Activated B cell treated with CpG ODN at 0.5 μM for 24 hours (primary cell): ENCODE measurements at regions of chrX and their contacts with region 1.

Region 1: GRCh38 chrX:49120099-49120498 is 3.4 kb downstream of the GPKOW start:
- DNase-seq: no peak
- ATAC-seq: no peak
- H3K4me3 Mint-ChIP-seq: no peak overlapping the region
- H3K27ac Mint-ChIP-seq: no peak overlapping the region
- H3K4me1 Mint-ChIP-seq: peaks cover 27% of the 10 kb centered on the region
- H3K27me3 Mint-ChIP-seq: no peaks in the 10 kb centered on the region
- CTCF ChIP-seq: no peak

Region 2: DNA sequence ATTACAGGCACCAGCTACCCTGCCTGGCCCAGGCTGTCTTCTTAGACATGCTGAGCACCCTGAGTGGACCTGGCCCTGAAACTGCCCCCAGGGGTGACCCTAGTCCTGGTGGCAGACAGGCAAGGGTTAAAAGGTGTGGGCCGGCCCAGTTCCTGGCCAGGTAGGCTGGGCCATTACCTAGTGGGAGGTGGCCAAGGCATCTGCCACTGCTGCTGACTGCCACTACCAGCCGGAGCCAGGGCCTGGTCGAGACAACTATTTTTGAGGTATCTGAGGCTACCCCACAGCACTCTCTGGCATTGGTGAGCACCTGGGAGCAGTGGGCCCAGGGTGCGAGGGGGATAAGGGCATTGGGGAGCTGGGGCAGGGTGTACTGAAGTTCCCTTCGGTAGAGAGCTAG is 61.3 kb before region 1 on chrX and contains the start of gene CCDC120:
- CTCF ChIA-PET with region 1: no interaction called
- POLR2A ChIA-PET with region 1: no interaction called
- intact Hi-C with region 1: no loop called
- DNase-seq: no peak
- ATAC-seq: no peak
- H3K4me3 Mint-ChIP-seq: no peak within 1 kb of the TSS
- H3K27ac Mint-ChIP-seq: no peak within 1 kb of the TSS
- H3K4me1 Mint-ChIP-seq: peaks cover 16% of the 10 kb centered on the region
- H3K27me3 Mint-ChIP-seq: no peaks in the 10 kb centered on the region
- CTCF ChIP-seq: no peak
- total RNA-seq, gene CCDC120: 7.9 and 8.9 TPM in 2 replicates

Region 3: DNA sequence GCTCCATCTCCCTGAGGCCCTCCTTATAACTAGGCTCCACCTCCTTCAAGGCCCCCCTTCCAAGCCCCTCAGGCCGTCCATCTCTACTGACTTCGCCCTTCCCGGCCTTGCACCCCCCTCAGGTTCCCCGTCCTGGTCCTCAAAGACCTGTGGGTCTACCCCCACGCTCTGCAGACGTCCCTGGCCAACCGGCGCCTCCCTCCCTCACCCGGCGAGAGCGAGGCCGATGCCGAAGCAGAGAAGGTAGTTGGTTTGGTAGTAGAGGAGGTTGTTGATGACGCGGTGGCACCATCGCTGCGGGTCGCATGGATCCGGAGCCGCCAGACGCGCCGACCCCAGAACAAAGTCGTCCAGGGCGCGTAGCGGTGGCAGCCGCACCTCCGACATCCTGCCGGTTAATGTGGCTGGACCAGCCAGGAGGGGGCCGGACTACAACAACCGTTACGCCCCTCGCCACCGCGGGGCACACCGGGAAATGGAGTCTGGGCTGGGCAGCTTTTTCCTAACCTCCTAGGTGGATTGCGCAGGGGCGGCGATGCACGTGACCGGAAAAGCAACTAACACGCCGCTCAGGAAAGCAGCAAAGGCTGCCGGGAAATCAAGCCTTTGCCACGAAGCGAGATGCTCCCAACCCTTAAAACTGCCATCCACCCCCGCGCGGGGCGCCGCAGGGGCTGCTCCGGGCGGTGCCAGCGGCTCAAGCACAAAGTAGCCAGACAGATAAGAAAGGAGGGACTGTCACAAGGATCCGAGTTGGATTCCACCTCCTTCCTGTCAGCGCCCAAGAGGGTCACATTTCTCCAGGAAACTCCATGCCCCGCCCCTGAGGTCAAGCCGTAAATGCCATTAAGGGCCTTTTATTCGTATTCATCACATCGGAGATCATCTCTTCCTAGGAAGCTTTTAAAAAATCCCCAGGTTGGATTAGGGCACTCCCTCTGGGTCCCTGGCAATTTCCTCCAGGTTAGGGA is 46.2 kb before region 1 on chrX and contains the start of gene PRAF2:
- CTCF ChIA-PET with region 1: no interaction called
- POLR2A ChIA-PET with region 1: no interaction called
- intact Hi-C with region 1: loop called (anchors 1 kb)
- DNase-seq: peak; percentile 76
- ATAC-seq: peak; percentile 99
- H3K4me3 Mint-ChIP-seq: peak within 1 kb of the TSS; percentile 84
- H3K27ac Mint-ChIP-seq: peak within 1 kb of the TSS; percentile 72
- H3K4me1 Mint-ChIP-seq: peaks cover 23% of the 10 kb centered on the region
- H3K27me3 Mint-ChIP-seq: no peaks in the 10 kb centered on the region
- CTCF ChIP-seq: no peak
- total RNA-seq, gene PRAF2: 10.6 and 11.6 TPM in 2 replicates

Region 4: GRCh38 chrX:49100704-49101628 is 19.1 kb before region 1 on chrX:
- CTCF ChIA-PET with region 1: no interaction called
- POLR2A ChIA-PET with region 1: no interaction called
- intact Hi-C with region 1: loop called (anchors 2 kb)
- DNase-seq: peak; percentile 78
- ATAC-seq: peak; percentile 92
- H3K4me3 Mint-ChIP-seq: peak overlapping the region; percentile 90
- H3K27ac Mint-ChIP-seq: peak overlapping the region; percentile 95
- H3K4me1 Mint-ChIP-seq: peaks cover 9% of the 10 kb centered on the region
- H3K27me3 Mint-ChIP-seq: no peaks in the 10 kb centered on the region
- CTCF ChIP-seq: no peak

Region 5: GRCh38 chrX:49155900-49156837 is 36.1 kb after region 1 on chrX:
- CTCF ChIA-PET with region 1: no interaction called
- POLR2A ChIA-PET with region 1: interaction called, 7 read pairs
- intact Hi-C with region 1: loop called (anchors 1 kb)
- DNase-seq: peak; percentile 78
- ATAC-seq: peak; percentile 91
- H3K4me3 Mint-ChIP-seq: peak overlapping the region; percentile 93
- H3K27ac Mint-ChIP-seq: peak overlapping the region; percentile 93
- H3K4me1 Mint-ChIP-seq: peaks cover 20% of the 10 kb centered on the region
- H3K27me3 Mint-ChIP-seq: no peaks in the 10 kb centered on the region
- CTCF ChIP-seq: no peak

Region 6: GRCh38 chrX:49163555-49164419 is 43.7 kb after region 1 on chrX:
- CTCF ChIA-PET with region 1: interaction called, 3 read pairs
- POLR2A ChIA-PET with region 1: interaction called, 3 read pairs
- intact Hi-C with region 1: loop called (anchors 1 kb)
- DNase-seq: peak; percentile 79
- ATAC-seq: peak; percentile 60
- H3K4me3 Mint-ChIP-seq: peak overlapping the region; percentile 83
- H3K27ac Mint-ChIP-seq: peak overlapping the region; percentile 92
- H3K4me1 Mint-ChIP-seq: peaks cover 31% of the 10 kb centered on the region
- H3K27me3 Mint-ChIP-seq: no peaks in the 10 kb centered on the region
- CTCF ChIP-seq: no peak